Activated naive CD8-positive, alpha-beta T cell treated with anti-CD3 and anti-CD28 coated beads, Interleukin-2, amount 10 ng/mL, durations not matched to agents 7 days and 5 days (primary cell): ENCODE measurements at regions of chr10 and their contacts with region 1.

Region 1: DNA sequence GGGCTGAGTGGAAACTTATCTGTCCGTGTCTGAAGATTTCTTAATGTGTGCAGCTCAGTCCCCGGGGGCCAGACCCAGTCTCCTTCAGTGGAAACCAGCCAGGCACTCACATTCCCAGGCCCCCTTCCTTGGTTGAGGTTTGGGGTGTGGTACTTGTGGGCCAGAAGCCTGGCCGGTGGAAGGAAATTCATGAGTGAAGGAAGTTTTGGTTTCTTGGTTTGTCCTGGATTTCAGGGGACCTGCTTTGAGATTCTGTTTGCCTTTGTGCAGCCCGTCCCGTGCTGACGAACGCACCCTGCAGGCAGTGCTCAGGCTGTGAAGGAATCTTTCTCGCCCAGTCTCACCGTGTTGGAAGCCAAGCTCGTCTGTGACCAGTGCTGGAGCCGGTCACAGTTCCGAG is 2.9 kb downstream of the INPP5A start:
- DNase-seq: no peak
- ATAC-seq: no peak
- H3K4me3 Mint-ChIP-seq: peak overlapping the region; percentile 92
- H3K27ac Mint-ChIP-seq: peak overlapping the region; percentile 77
- H3K4me1 Mint-ChIP-seq: peaks cover 51% of the 10 kb centered on the region
- H3K27me3 Mint-ChIP-seq: no peaks in the 10 kb centered on the region

Region 2: GRCh38 chr10:132551093-132551807 is 10.8 kb after region 1 on chr10:
- POLR2A ChIA-PET with region 1: interaction called, 38 read pairs
- DNase-seq: peak; percentile 59
- ATAC-seq: peak; percentile 77
- H3K4me3 Mint-ChIP-seq: peak overlapping the region; percentile 82
- H3K27ac Mint-ChIP-seq: peak overlapping the region; percentile 95
- H3K4me1 Mint-ChIP-seq: peaks cover 27% of the 10 kb centered on the region
- H3K27me3 Mint-ChIP-seq: no peaks in the 10 kb centered on the region